GM12878 (cell line): ENCODE measurements at regions of chr10 and their contacts with region 1.

Region 1: GRCh38 chr10:101569838-101570766 is 18.0 kb downstream of the POLL start:
- DNase-seq: peak; percentile 19
- ATAC-seq: peak; percentile 92
- H3K4me3 ChIP-seq: peak overlapping the region; percentile 78
- H3K27ac ChIP-seq: no peak overlapping the region
- H3K4me1 ChIP-seq: peaks cover 5% of the 10 kb centered on the region; the same call in 1 of the 2 replicates
- H3K27me3 ChIP-seq: peaks cover 0 to 4% of the 10 kb centered on the region in 2 experiments; a peak in 1 of 4 replicates
- CTCF ChIP-seq: peak; percentile 47 to 88 (median 81)
- EP300 ChIP-seq: no peak
- POLR2A ChIP-seq: no peak; the same call in none of the 2 replicates
- RAD21 ChIP-seq: peak; percentile 78

Region 2: GRCh38 chr10:101161494-101162299 is 408.4 kb before region 1 on chr10:
- CTCF ChIA-PET with region 1: interaction called, 7 read pairs
- POLR2A ChIA-PET with region 1: no interaction called
- RAD21 ChIA-PET with region 1: interaction called, 3 read pairs
- SMC1A ChIA-PET with region 1: interaction called, 4 read pairs
- in situ Hi-C with region 1: no loop called
- intact Hi-C with region 1: loop called (anchors 5 kb)
- DNase-seq: peak; percentile 12
- ATAC-seq: peak; percentile 96
- H3K4me3 ChIP-seq: no peak overlapping the region
- H3K27ac ChIP-seq: no peak overlapping the region
- H3K4me1 ChIP-seq: peaks cover 6% of the 10 kb centered on the region
- H3K27me3 ChIP-seq: peaks cover 1 to 2% of the 10 kb centered on the region in 2 experiments; a peak in 3 of 4 replicates
- CTCF ChIP-seq: peak; percentile 94 to 97 (median 95); a peak in 5 of 6 replicates
- EP300 ChIP-seq: no peak
- POLR2A ChIP-seq: no peak
- RAD21 ChIP-seq: peak; percentile 70

Region 3: GRCh38 chr10:101272229-101272868 is 297.8 kb before region 1 on chr10:
- CTCF ChIA-PET with region 1: interaction called, 10 read pairs
- POLR2A ChIA-PET with region 1: no interaction called
- RAD21 ChIA-PET with region 1: interaction called, 4 read pairs
- SMC1A ChIA-PET with region 1: interaction called, 4 read pairs
- in situ Hi-C with region 1: loop called (anchors 5 kb)
- intact Hi-C with region 1: loop called (anchors 5 kb)
- DNase-seq: no peak
- ATAC-seq: peak; percentile 96
- H3K4me3 ChIP-seq: no peak overlapping the region
- H3K27ac ChIP-seq: no peak overlapping the region
- H3K4me1 ChIP-seq: no peaks in the 10 kb centered on the region
- H3K27me3 ChIP-seq: no peaks in the 10 kb centered on the region
- CTCF ChIP-seq: peak; percentile 74 to 84 (median 77)
- EP300 ChIP-seq: no peak
- POLR2A ChIP-seq: no peak
- RAD21 ChIP-seq: peak; percentile 54

Region 4: GRCh38 chr10:101297901-101298486 is 272.1 kb before region 1 on chr10:
- CTCF ChIA-PET with region 1: interaction called, 6 read pairs
- POLR2A ChIA-PET with region 1: no interaction called
- RAD21 ChIA-PET with region 1: interaction called, 6 read pairs
- SMC1A ChIA-PET with region 1: no interaction called
- in situ Hi-C with region 1: no loop called
- intact Hi-C with region 1: loop called (anchors 2 kb)
- DNase-seq: no peak
- ATAC-seq: peak; percentile 96
- H3K4me3 ChIP-seq: no peak overlapping the region
- H3K27ac ChIP-seq: no peak overlapping the region
- H3K4me1 ChIP-seq: no peaks in the 10 kb centered on the region
- H3K27me3 ChIP-seq: peaks cover 0 to 3% of the 10 kb centered on the region in 2 experiments; a peak in 2 of 4 replicates
- CTCF ChIP-seq: peak; percentile 77 to 96 (median 96)
- EP300 ChIP-seq: no peak
- POLR2A ChIP-seq: no peak
- RAD21 ChIP-seq: peak; percentile 36; the same call in 1 of the 2 replicates

Region 5: GRCh38 chr10:101467286-101467770 is 102.8 kb before region 1 on chr10:
- CTCF ChIA-PET with region 1: interaction called, 15 read pairs
- POLR2A ChIA-PET with region 1: no interaction called
- RAD21 ChIA-PET with region 1: no interaction called
- SMC1A ChIA-PET with region 1: interaction called, 3 read pairs
- in situ Hi-C with region 1: no loop called
- intact Hi-C with region 1: no loop called
- DNase-seq: peak; percentile 23
- ATAC-seq: peak; percentile 96
- H3K4me3 ChIP-seq: no peak overlapping the region
- H3K27ac ChIP-seq: no peak overlapping the region
- H3K4me1 ChIP-seq: no peaks in the 10 kb centered on the region
- H3K27me3 ChIP-seq: no peaks in the 10 kb centered on the region
- CTCF ChIP-seq: peak; percentile 81 to 91 (median 81)
- EP300 ChIP-seq: no peak
- POLR2A ChIP-seq: no peak
- RAD21 ChIP-seq: peak; percentile 66

Region 6: DNA sequence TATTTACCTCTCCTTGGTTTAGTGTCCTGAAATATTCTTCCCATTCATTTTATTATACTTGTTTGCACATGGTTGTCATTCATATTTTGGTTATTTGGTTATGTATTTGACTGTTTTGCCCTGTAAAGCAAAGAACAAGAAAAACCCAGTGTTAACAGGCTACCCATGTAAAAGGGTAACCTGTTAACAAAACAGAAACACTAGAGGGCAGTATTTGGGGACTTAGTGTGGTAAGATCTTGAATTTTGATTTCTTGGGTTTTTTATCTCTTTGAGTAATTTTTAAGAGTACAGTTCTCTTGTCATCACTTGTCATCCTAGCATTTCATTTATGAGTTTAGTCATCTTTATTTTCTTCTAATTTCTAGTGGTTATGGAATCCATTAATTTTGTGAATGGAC is 33.3 kb before region 1 on chr10:
- CTCF ChIA-PET with region 1: interaction called, 24 read pairs
- POLR2A ChIA-PET with region 1: no interaction called
- RAD21 ChIA-PET with region 1: interaction called, 4 read pairs
- SMC1A ChIA-PET with region 1: interaction called, 4 read pairs
- in situ Hi-C with region 1: no loop called
- intact Hi-C with region 1: no loop called
- DNase-seq: no peak
- ATAC-seq: peak; percentile 72
- H3K4me3 ChIP-seq: no peak overlapping the region
- H3K27ac ChIP-seq: no peak overlapping the region
- H3K4me1 ChIP-seq: 0 out of 2 replicates have a peak, but pooled peaks cover 3% of the 10 kb centered on the region
- H3K27me3 ChIP-seq: no peaks in the 10 kb centered on the region
- CTCF ChIP-seq: peak; percentile 38 to 52 (median 48); a peak in 5 of 6 replicates
- EP300 ChIP-seq: no peak
- POLR2A ChIP-seq: no peak
- RAD21 ChIP-seq: 0 out of 2 replicates have a peak, but pooled peaks have one; percentile 32

Region 7: DNA sequence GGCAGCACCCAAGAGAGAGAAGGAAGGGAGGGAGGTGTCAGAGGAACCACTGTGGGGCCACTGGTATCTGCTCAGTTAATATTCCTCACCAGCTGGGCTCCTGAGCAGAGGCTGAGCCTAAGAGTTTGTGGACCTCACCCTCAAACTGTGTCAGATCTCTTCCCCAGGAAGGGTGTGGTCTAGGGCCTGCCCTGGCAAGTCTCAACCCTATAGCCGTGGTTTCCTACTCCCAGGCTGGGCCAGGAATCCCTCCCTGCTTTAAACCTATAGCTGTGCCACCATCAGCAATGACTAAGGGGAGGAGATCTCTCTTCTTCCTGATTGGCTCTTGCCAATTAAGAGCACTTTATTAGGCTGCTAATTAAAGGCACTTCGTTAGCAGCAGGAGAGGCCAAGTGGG is 11.9 kb before region 1 on chr10:
- CTCF ChIA-PET with region 1: interaction called, 17 read pairs
- POLR2A ChIA-PET with region 1: no interaction called
- RAD21 ChIA-PET with region 1: no interaction called
- SMC1A ChIA-PET with region 1: interaction called, 4 read pairs
- in situ Hi-C with region 1: no loop called
- intact Hi-C with region 1: no loop called
- DNase-seq: no peak
- ATAC-seq: peak; percentile 44
- H3K4me3 ChIP-seq: no peak overlapping the region
- H3K27ac ChIP-seq: no peak overlapping the region
- H3K4me1 ChIP-seq: peaks cover 13% of the 10 kb centered on the region
- H3K27me3 ChIP-seq: no peaks in the 10 kb centered on the region
- CTCF ChIP-seq: no peak
- EP300 ChIP-seq: no peak
- POLR2A ChIP-seq: no peak
- RAD21 ChIP-seq: no peak

Region 8: GRCh38 chr10:101710059-101710695 is 140.1 kb after region 1 on chr10:
- CTCF ChIA-PET with region 1: no interaction called
- POLR2A ChIA-PET with region 1: no interaction called
- RAD21 ChIA-PET with region 1: no interaction called
- SMC1A ChIA-PET with region 1: no interaction called
- in situ Hi-C with region 1: no loop called
- intact Hi-C with region 1: no loop called
- DNase-seq: no peak
- ATAC-seq: peak; percentile 50; the same call in 2 of the 3 replicates
- H3K4me3 ChIP-seq: no peak overlapping the region
- H3K27ac ChIP-seq: no peak overlapping the region
- H3K4me1 ChIP-seq: no peaks in the 10 kb centered on the region
- H3K27me3 ChIP-seq: no peaks in the 10 kb centered on the region
- CTCF ChIP-seq: peak; percentile 3 to 16 (median 11); a peak in 2 of 6 replicates
- EP300 ChIP-seq: no peak
- POLR2A ChIP-seq: no peak
- RAD21 ChIP-seq: no peak